Activated naive CD4-positive, alpha-beta T cell treated with anti-CD3 and anti-CD28 coated beads for 36 hours (primary cell): ENCODE measurements at regions of chr13 and their contacts with region 1.

Region 1: DNA sequence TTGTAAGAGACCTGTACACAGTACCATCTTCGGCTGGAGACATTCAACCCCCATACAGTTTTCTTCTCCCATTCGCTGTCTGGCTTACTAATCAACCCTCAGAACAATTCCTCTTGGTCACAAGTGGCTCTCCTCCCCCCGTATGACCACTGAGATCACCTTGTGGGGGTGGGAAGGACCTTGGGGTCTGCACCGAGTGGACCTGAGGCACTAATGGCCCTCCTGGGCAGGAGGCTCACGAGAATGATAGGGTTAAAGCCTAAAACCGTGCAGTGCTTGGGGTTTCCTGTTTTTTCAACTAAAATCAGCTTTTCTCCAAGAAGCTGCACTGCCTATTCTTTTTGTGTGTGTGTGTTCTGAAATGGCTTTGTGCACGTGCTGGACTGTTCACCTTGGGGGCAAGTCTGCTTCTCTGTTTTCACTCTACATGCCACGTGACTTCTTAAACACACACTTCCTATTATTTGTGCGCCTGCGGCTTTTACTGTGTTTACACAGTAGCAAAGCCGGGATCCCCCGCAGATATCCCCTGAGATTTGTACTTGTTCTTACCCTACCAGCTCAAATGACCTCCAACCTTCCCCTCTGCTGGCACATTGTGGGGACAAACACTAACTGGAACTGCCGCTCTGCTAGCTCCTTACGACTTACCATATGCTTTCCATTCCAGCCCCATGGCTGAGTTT is 12.3 kb downstream of the RBM26 start:
- DNase-seq: peak; percentile 45
- H3K4me3 Mint-ChIP-seq: peak overlapping the region; percentile 50
- H3K27ac Mint-ChIP-seq: peak overlapping the region; percentile 60
- H3K4me1 Mint-ChIP-seq: peaks cover 64% of the 10 kb centered on the region
- H3K27me3 Mint-ChIP-seq: no peaks in the 10 kb centered on the region

Region 2: GRCh38 chr13:78326633-78327032 is 1067.1 kb before region 1 on chr13:
- CTCF ChIA-PET with region 1: no interaction called
- intact Hi-C with region 1: no loop called
- DNase-seq: no peak
- H3K4me3 Mint-ChIP-seq: no peak overlapping the region
- H3K27ac Mint-ChIP-seq: no peak overlapping the region
- H3K4me1 Mint-ChIP-seq: no peaks in the 10 kb centered on the region
- H3K27me3 Mint-ChIP-seq: peaks cover 3% of the 10 kb centered on the region

Region 3: DNA sequence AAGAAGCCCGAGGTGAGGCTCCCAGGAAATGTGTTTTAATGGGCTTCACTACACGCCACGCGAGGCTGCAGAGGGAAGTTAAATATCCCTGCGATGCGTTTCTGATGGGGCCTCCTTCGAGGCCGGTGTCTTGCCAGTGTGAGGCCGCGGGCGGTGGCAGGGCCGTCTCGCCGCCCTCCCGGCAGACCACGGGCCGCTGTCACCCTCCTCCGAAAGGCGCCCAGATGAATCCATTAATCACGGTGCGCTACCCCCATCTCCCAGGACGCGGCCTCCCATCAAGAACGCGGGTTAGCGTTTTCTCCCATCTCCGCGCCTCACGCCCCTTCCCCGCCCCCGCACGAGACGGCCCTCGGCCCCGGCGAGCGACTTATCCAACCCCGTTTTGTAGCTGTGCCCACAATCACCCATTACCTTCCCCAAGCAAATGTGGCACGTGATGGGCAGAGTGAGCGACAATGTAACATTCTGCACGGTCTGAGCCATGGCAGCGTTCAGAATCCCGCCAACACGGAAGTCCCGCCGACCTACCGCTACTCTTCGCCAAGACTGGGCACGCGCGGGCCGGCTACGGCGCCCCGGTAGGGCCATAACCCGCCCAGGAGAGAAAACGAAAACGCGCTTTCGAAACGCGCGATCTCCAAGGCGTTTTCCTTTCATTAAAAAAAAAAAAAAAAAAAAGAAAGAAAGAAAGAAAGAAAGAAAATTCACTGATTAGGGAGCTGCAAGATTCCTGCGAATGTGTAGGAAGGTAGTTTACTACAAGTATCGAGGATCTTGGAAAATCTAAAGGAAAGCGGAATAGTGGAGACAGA is 734.9 kb before region 1 on chr13 and contains the start of gene OBI1:
- CTCF ChIA-PET with region 1: no interaction called
- intact Hi-C with region 1: loop called (anchors 5 kb)
- DNase-seq: peak; percentile 90
- H3K4me3 Mint-ChIP-seq: peak within 1 kb of the TSS; percentile 100
- H3K27ac Mint-ChIP-seq: peak within 1 kb of the TSS; percentile 96
- H3K4me1 Mint-ChIP-seq: peaks cover 35% of the 10 kb centered on the region
- H3K27me3 Mint-ChIP-seq: no peaks in the 10 kb centered on the region
- total RNA-seq, gene OBI1: 16.0 to 17.7 TPM

Region 4: DNA sequence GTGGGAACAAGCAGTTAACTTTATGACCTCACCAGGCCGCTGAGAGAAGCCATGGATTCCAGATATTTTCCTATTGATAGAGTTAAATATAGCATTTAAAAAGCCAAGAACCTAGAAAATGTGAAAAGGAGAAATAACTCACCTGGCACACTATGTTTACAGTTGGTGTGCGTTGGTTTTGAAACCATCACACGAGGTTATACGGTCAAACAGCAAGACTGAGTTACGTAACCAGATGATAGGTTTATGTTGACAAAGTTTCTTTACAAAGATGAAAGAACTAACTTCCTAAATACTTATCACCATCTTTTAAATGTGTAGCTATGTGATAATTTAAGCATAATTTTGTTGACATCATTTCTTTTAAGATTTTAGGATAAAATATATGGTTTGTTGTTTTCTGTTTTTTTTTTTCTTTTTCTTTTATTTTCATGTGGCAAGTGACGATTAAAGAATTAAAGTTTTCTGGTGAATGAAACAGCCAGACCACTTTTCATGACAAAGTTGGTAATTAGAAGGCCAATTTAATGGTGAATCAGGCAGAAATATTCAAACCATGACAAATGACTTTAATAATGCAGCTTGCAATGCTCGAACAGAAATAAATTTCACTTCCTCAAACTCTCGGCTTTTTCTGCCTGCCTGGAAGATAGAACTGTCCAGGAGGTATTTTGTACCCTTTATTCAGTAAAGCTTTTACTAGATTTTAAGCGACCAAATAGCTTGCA is 395.6 kb before region 1 on chr13:
- CTCF ChIA-PET with region 1: no interaction called
- intact Hi-C with region 1: loop called (anchors 5 kb)
- DNase-seq: no peak
- H3K4me3 Mint-ChIP-seq: no peak overlapping the region
- H3K27ac Mint-ChIP-seq: no peak overlapping the region
- H3K4me1 Mint-ChIP-seq: no peaks in the 10 kb centered on the region
- H3K27me3 Mint-ChIP-seq: peaks cover 18% of the 10 kb centered on the region

Region 5: DNA sequence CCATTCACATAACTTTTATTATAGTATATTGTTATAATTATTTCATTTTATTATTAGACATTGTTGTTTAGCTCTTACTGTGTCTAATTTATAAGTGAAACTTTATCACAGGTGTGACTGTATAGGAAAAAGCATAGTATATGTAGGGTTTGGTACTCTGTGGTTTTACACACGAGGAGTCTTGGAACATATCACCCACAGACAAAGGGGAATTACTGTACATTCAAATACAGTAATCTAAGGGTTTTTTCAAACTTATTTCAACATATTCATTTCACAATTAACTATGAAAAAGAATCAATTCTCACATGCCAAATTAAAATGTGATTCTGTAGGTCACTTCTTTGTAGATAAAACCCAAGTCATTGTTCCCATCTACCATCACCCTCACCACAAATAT is 33.6 kb before region 1 on chr13:
- CTCF ChIA-PET with region 1: interaction called, 11 read pairs
- intact Hi-C with region 1: loop called (anchors 2 kb)
- DNase-seq: no peak
- H3K4me3 Mint-ChIP-seq: no peak overlapping the region
- H3K27ac Mint-ChIP-seq: no peak overlapping the region
- H3K4me1 Mint-ChIP-seq: peaks cover 44% of the 10 kb centered on the region
- H3K27me3 Mint-ChIP-seq: no peaks in the 10 kb centered on the region

Region 6: DNA sequence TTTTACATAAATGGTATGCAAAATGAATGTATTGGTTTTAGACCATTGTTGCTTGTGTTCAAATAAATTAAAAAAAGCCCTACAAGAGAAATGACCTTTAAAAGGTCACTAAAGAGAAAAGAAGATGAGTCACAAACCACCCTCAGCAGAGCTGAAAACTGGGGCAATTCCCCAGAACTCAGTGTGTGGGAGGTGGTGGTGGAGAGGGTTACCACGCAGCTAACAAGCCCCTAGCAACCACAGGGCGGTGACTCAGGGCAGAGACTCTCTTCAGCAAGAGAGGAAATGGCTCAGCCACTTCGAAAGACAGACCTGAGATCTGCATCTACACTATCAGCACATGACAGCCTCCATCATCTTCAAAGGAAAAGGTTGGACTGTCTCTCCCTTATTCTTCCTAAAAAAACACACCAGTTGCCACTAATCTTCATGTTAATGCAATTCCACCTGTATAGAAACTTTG is 57.8 kb after region 1 on chr13:
- CTCF ChIA-PET with region 1: no interaction called
- intact Hi-C with region 1: loop called (anchors 2 kb)
- DNase-seq: peak; percentile 97
- H3K4me3 Mint-ChIP-seq: peak overlapping the region; percentile 68
- H3K27ac Mint-ChIP-seq: peak overlapping the region; percentile 93
- H3K4me1 Mint-ChIP-seq: peaks cover 62% of the 10 kb centered on the region
- H3K27me3 Mint-ChIP-seq: no peaks in the 10 kb centered on the region